Right ventricle myocardium inferior (tissue), 1 donor: ENCODE measurements at regions of chr14 and their contacts with region 1.

Region 1: DNA sequence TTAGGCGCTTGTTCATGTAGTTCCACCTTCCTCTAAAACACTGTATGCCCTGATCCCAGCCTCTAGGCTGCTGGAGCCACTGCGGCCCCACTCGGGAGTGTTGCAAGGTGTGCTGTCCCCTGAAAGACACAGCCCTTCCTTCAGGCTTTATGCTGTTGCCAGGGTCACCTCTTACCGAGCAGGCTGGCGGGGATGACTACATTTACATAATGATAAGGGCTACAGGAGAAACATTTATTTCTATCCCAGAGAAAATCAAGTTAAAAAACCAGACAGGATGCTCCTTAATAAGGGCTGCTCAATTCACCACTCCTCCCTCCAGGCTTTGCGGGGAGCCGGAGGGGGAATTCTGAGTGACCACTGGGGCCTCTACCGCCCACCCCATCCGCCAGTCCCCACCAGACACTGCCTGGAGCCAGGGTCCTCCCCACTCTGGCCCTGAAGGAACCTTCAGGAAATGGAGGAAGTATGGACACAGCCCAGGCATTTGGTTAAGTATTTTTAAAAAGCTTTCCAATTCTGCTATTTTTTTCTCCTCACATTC is 200.6 kb downstream of the TTC7B start:
- DNase-seq: no peak
- ATAC-seq: peak; percentile 24

Region 2: GRCh38 chr14:90536092-90536491 is 79.5 kb before region 1 on chr14:
- intact Hi-C with region 1: loop called (anchors 5 kb)
- DNase-seq: peak; percentile 76
- ATAC-seq: peak; percentile 73